ENCODE measurements at regions of chr14 and their contacts with region 1.

Region 1: GRCh38 chr14:66641861-66642635 is 134.1 kb downstream of the GPHN start:
- DNase-seq: no peak
- H3K4me3 ChIP-seq: no peak overlapping the region
- H3K27ac ChIP-seq: no peak overlapping the region
- H3K4me1 ChIP-seq: no peaks in the 10 kb centered on the region
- H3K27me3 ChIP-seq: no peaks in the 10 kb centered on the region
- CTCF ChIP-seq: no peak

Region 2: DNA sequence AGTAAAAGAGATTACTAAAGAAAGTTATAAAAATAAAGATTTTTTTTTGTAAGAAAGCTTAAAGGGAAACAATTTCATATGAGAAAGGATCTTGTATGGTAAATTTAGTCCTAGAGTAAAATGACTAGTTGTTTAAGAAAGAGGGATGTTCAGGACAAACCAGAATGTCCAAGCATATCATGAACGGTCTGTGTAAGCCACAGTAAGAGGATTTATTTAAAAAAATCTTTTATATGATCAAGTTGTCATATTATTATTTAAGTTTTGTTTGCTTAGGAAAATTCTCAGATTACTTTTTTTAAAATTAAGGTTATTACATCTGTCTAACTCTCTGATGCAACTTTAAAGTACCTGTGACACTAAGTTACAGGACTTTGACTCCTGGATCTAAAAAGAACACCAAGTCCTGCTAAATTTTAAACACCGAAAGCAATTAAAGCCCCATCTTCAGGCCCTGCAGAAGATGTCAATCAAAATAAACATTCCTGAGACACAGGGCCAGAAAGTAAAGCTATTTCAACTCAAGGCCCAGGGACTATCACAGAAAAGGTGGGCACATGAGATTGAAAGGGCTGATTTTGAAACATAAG is 173.2 kb before region 1 on chr14:
- CTCF ChIA-PET with region 1: no interaction called
- POLR2A ChIA-PET with region 1: no interaction called
- intact Hi-C with region 1: no loop called
- DNase-seq: no peak
- H3K4me3 ChIP-seq: no peak overlapping the region
- H3K27ac ChIP-seq: no peak overlapping the region
- H3K4me1 ChIP-seq: no peaks in the 10 kb centered on the region
- H3K27me3 ChIP-seq: no peaks in the 10 kb centered on the region
- CTCF ChIP-seq: no peak

Region 3: GRCh38 chr14:66662374-66662773 is 20.3 kb after region 1 on chr14:
- CTCF ChIA-PET with region 1: no interaction called
- POLR2A ChIA-PET with region 1: no interaction called
- intact Hi-C with region 1: no loop called
- DNase-seq: peak in 1 of 2 experiments; percentile 6
- H3K4me3 ChIP-seq: no peak overlapping the region
- H3K27ac ChIP-seq: no peak overlapping the region
- H3K4me1 ChIP-seq: no peaks in the 10 kb centered on the region
- H3K27me3 ChIP-seq: no peaks in the 10 kb centered on the region
- CTCF ChIP-seq: peak; percentile 50

Region 4: DNA sequence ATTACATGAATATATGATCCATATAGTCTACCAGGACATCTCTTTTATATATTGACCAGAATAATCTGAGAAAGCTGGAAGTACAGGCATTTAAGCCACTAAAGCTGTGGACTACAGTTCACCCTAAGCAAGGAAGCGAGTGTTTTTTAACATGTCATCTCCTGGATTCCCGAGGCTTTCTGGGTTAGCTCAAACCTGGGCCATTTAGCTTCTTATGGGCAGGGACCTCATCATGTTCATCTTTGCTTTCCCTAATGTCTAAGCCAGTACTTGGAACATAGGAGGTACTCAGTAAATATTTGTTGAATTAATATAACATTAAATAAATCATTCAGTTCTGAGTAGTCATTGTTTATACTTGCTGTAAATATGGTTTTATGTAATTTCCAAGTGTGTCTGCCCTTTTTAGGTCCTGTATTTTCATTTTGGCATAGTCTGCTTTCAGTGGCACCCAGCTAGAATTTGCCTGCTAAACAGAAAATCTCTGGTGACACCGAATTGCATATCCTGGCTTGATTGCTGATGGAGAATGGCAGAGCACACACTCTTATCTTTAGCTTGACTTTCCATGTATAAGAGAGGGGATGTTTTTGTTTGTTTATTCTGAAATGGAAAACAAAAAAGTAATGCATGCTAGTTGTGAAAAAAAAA is 1806.3 kb after region 1 on chr14:
- CTCF ChIA-PET with region 1: no interaction called
- POLR2A ChIA-PET with region 1: interaction called, 18 read pairs
- intact Hi-C with region 1: no loop called
- DNase-seq: no peak
- H3K4me3 ChIP-seq: no peak overlapping the region
- H3K27ac ChIP-seq: no peak overlapping the region
- H3K4me1 ChIP-seq: no peaks in the 10 kb centered on the region
- H3K27me3 ChIP-seq: no peaks in the 10 kb centered on the region
- CTCF ChIP-seq: no peak